OCI-LY7 (cell line): ENCODE measurements at regions of chr5 and their contacts with region 1.

Region 1: GRCh38 chr5:146203011-146203871 is at the start of gene RBM27:
- DNase-seq: peak; percentile 99
- H3K4me3 ChIP-seq: peak within 1 kb of the TSS; percentile 97
- H3K27ac ChIP-seq: peak within 1 kb of the TSS; percentile 51
- H3K4me1 ChIP-seq: peaks cover 32% of the 10 kb centered on the region
- CTCF ChIP-seq: no peak
- total RNA-seq, gene RBM27: 19.4 and 20.9 TPM in 2 replicates

Region 2: GRCh38 chr5:145660897-145661640 is 542.2 kb before region 1 on chr5:
- CTCF ChIA-PET with region 1: no interaction called
- POLR2A ChIA-PET with region 1: no interaction called
- intact Hi-C with region 1: no loop called
- DNase-seq: no peak
- H3K4me3 ChIP-seq: no peak overlapping the region
- H3K27ac ChIP-seq: no peak overlapping the region
- H3K4me1 ChIP-seq: no peaks in the 10 kb centered on the region
- CTCF ChIP-seq: no peak

Region 3: DNA sequence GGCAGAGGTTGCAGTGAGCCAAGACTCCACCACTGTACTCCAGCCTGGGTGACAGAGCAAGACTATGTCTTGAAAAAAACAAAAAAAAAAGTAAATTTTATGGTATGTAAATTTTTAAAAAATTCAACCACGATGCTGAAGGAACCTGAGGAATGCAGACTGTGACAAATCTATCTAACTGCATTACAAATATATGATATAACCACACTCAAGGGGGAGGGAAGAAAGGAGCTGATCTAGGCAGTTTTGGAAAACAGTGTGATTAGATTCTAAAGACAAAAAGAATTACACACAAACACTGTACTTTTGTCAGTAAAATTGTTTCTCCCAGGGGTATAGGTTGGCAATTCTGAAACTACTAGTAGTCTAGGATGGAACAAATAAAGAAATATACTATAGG is 37.8 kb before region 1 on chr5:
- CTCF ChIA-PET with region 1: no interaction called
- POLR2A ChIA-PET with region 1: no interaction called
- intact Hi-C with region 1: no loop called
- DNase-seq: no peak
- H3K4me3 ChIP-seq: no peak overlapping the region
- H3K27ac ChIP-seq: no peak overlapping the region
- H3K4me1 ChIP-seq: no peaks in the 10 kb centered on the region
- CTCF ChIP-seq: no peak

Region 4: DNA sequence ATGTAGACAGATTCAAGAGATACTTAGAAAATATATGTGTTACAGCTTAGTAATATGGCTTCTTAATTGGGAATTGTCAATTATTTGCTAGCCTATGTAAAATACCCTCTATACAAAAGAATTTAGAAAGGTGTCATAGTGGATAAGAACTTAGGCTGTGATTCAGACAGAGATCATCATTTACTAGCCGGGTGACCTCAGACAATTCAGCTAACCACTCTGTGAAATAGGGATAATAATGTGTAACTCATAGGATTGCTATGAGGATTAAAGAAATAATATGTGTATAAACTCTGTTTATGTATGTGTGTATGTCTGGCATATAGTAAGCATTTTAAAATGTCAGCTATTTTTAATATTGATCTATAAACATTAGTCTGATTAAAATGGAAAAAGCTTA is 14.9 kb before region 1 on chr5:
- CTCF ChIA-PET with region 1: no interaction called
- POLR2A ChIA-PET with region 1: interaction called, 19 read pairs
- intact Hi-C with region 1: loop called (anchors 2 kb)
- DNase-seq: no peak
- H3K4me3 ChIP-seq: no peak overlapping the region
- H3K27ac ChIP-seq: no peak overlapping the region
- H3K4me1 ChIP-seq: peaks cover 6% of the 10 kb centered on the region
- CTCF ChIP-seq: no peak

Region 5: GRCh38 chr5:146213210-146213826 is 10.1 kb after region 1 on chr5:
- CTCF ChIA-PET with region 1: no interaction called
- POLR2A ChIA-PET with region 1: interaction called, 14 read pairs
- intact Hi-C with region 1: no loop called
- DNase-seq: peak; percentile 17
- H3K4me3 ChIP-seq: no peak overlapping the region
- H3K27ac ChIP-seq: no peak overlapping the region
- H3K4me1 ChIP-seq: peaks cover 34% of the 10 kb centered on the region
- CTCF ChIP-seq: no peak